Activated CD4-positive, alpha-beta T cell treated with anti-CD3 and anti-CD28 coated beads for 36 hours (primary cell): ENCODE measurements at regions of chr3 and their contacts with region 1.

Region 1: GRCh38 chr3:188170461-188171459 is 16.8 kb downstream of the LPP start:
- DNase-seq: peak; percentile 82
- ATAC-seq: peak; percentile 91
- H3K4me3 Mint-ChIP-seq: peak overlapping the region; percentile 20
- H3K27ac Mint-ChIP-seq: peak overlapping the region; percentile 88
- H3K4me1 Mint-ChIP-seq: peaks cover 59% of the 10 kb centered on the region
- H3K27me3 Mint-ChIP-seq: no peaks in the 10 kb centered on the region

Region 2: DNA sequence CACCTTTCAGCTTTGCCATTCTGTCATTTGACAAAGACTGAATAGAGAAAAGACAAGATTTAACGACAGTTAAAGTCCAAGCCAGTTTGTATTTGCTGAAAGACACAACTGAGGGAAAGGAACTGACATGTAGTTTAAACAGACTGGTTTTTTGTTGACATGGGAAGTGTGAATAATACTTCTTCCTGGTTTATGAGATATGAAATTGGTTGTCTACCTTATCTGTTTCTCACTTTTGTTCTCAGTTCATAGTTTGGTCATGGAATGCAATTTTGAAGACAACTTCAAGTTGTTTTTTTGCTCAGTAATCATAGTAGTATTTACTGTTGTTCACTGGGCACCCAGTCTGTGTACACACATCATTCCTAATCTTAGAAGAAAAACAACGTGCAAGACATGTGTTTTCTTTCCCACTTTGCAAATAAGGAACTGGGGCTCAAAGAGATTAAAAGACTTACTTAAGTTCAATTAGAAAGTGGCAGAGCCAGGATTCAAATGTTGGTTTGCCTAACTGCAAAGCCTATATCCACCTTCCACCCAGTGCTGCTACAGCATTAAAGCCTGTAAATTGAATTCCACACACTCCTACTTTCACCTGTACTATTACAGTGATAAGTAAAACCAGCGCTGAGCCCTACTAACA is 86.7 kb after region 1 on chr3:
- CTCF ChIA-PET with region 1: no interaction called
- POLR2A ChIA-PET with region 1: no interaction called
- intact Hi-C with region 1: loop called (anchors 1 to 5 kb)
- DNase-seq: no peak
- ATAC-seq: peak; percentile 12
- H3K4me3 Mint-ChIP-seq: no peak overlapping the region
- H3K27ac Mint-ChIP-seq: peak overlapping the region; percentile 62
- H3K4me1 Mint-ChIP-seq: peaks cover 46% of the 10 kb centered on the region
- H3K27me3 Mint-ChIP-seq: no peaks in the 10 kb centered on the region

Region 3: GRCh38 chr3:188389711-188390342 is 219.1 kb after region 1 on chr3:
- CTCF ChIA-PET with region 1: no interaction called
- POLR2A ChIA-PET with region 1: no interaction called
- intact Hi-C with region 1: loop called in 1 of 2 experiments (anchors 5 kb)
- DNase-seq: peak; percentile 81
- ATAC-seq: peak; percentile 92
- H3K4me3 Mint-ChIP-seq: peak overlapping the region; percentile 22
- H3K27ac Mint-ChIP-seq: peak overlapping the region; percentile 78
- H3K4me1 Mint-ChIP-seq: peaks cover 41% of the 10 kb centered on the region
- H3K27me3 Mint-ChIP-seq: no peaks in the 10 kb centered on the region

Region 4: DNA sequence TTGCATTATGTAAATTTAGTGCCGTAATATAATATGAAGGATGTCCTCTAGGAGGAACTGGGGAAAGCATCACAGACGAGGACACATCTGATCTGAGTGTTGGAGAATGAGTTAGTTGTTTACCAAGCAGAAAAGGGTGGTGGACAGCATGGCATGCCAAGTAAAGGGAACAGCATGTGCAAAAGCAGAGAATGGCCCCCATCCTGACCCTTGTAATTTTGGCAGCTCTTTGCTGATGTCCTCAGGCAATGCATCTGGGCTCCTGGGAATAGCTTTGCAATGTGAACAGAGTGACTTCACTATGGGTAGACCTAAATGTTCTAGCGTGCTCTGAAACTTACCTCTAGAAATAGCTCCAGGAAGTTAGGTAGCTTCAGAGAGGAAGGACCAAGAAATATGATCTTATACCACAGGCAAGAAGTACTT is 246.5 kb after region 1 on chr3:
- CTCF ChIA-PET with region 1: no interaction called
- POLR2A ChIA-PET with region 1: no interaction called
- intact Hi-C with region 1: no loop called
- DNase-seq: no peak
- ATAC-seq: no peak
- H3K4me3 Mint-ChIP-seq: no peak overlapping the region
- H3K27ac Mint-ChIP-seq: no peak overlapping the region
- H3K4me1 Mint-ChIP-seq: peaks cover 6% of the 10 kb centered on the region
- H3K27me3 Mint-ChIP-seq: no peaks in the 10 kb centered on the region